ENCODE measurements at regions of chr9 and their contacts with region 1.

Region 1: GRCh38 chr9:111597817-111598729 is 1.4 kb downstream of the PTGR1 start:
- DNase-seq: peak; percentile 27
- ATAC-seq: peak; percentile 61
- H3K4me3 Mint-ChIP-seq: peak overlapping the region; percentile 83
- H3K27ac Mint-ChIP-seq: no peak overlapping the region
- H3K4me1 Mint-ChIP-seq: peaks cover 22% of the 10 kb centered on the region
- H3K27me3 Mint-ChIP-seq: peaks cover 29% of the 10 kb centered on the region
- CTCF ChIP-seq: no peak

Region 2: DNA sequence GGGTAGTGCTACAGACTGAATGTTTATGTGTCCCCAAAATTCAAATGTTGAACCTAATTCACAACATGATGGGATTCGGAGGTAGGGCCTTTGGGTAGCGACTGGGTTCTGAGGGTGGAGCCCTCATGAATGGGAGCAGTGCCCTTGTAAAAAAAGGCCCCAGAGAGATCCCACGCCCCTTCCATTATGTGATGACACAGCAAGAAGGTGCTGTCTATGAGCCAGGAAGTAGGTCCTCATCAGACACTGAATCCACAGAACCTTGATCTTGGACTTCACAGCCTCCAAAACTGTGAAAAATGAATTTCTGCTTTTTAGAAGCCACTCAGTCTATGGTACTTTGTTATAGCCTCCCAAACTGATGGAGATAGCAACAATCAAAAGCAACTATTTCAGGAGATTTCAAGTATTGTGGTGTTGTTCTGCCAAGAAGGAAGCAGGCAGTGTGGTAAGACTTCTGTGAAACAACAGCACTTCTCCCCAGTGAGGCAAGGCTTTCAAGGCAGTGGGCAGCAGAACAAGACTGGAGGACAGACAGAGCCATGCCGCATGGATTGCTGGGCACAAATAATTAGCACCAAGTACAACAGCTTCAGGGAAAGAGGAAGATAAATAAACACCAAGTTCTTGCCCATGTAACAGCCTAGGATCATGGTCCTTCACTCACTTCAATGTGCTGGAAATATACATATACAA is 344.2 kb before region 1 on chr9:
- CTCF ChIA-PET with region 1: no interaction called
- POLR2A ChIA-PET with region 1: no interaction called
- intact Hi-C with region 1: no loop called
- DNase-seq: no peak
- ATAC-seq: no peak
- H3K4me3 Mint-ChIP-seq: no peak overlapping the region
- H3K27ac Mint-ChIP-seq: no peak overlapping the region
- H3K4me1 Mint-ChIP-seq: no peaks in the 10 kb centered on the region
- H3K27me3 Mint-ChIP-seq: no peaks in the 10 kb centered on the region
- CTCF ChIP-seq: no peak

Region 3: GRCh38 chr9:111613441-111614039 is 15.5 kb after region 1 on chr9:
- CTCF ChIA-PET with region 1: no interaction called
- POLR2A ChIA-PET with region 1: interaction called, 11 read pairs
- intact Hi-C with region 1: no loop called
- DNase-seq: no peak
- ATAC-seq: no peak
- H3K4me3 Mint-ChIP-seq: no peak overlapping the region
- H3K27ac Mint-ChIP-seq: no peak overlapping the region
- H3K4me1 Mint-ChIP-seq: no peaks in the 10 kb centered on the region
- H3K27me3 Mint-ChIP-seq: peaks cover 40% of the 10 kb centered on the region
- CTCF ChIP-seq: no peak

Region 4: DNA sequence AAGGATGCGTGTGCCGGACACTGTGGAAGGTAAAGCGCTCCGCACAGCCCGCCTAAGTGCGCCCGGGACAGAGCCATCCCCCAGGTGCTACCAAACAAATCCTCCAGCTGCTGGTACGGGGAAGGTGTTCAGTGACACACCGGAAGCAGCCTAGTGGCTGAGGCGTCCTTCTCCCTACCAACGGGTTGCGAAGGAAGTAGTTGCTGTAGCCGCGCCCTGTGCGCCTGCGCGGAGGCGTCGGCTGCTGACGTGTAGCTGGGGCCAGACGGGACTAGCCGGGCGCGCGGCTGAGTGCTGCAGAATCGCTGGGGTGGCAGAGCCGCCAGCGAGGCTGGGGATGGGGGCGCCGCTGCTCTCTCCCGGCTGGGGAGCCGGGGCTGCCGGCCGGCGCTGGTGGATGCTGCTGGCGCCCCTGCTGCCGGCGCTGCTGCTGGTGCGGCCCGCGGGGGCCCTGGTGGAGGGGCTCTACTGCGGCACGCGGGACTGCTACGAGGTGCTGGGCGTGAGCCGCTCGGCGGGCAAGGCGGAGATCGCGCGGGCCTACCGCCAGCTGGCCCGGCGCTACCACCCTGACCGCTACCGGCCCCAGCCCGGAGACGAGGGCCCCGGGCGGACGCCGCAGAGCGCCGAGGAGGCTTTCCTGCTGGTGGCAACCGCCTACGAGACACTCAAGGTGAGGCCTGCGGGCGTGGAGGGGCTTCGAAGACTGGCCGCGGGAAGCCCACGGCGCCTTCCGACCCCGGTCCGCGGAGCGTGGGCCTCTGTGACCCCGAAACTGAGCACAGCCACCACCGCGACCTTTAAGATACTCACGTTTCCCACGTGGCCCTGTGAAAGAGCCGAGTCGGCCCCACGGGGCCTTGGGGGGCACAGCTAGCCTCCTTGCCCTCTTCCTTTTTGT is 33.2 kb after region 1 on chr9 and contains the start of gene DNAJC25:
- CTCF ChIA-PET with region 1: no interaction called
- POLR2A ChIA-PET with region 1: interaction called, 3 read pairs
- intact Hi-C with region 1: loop called (anchors 2 kb)
- DNase-seq: peak; percentile 91
- ATAC-seq: peak; percentile 94
- H3K4me3 Mint-ChIP-seq: peak within 1 kb of the TSS; percentile 95
- H3K27ac Mint-ChIP-seq: peak within 1 kb of the TSS; percentile 89
- H3K4me1 Mint-ChIP-seq: peaks cover 29% of the 10 kb centered on the region
- H3K27me3 Mint-ChIP-seq: no peaks in the 10 kb centered on the region
- CTCF ChIP-seq: no peak
- total RNA-seq, gene DNAJC25: 3.5 and 4.3 TPM in 2 replicates

Region 5: GRCh38 chr9:111691672-111692329 is 93.7 kb after region 1 on chr9:
- CTCF ChIA-PET with region 1: interaction called, 4 read pairs
- POLR2A ChIA-PET with region 1: no interaction called
- intact Hi-C with region 1: loop called (anchors 1 kb)
- DNase-seq: no peak
- ATAC-seq: no peak
- H3K4me3 Mint-ChIP-seq: no peak overlapping the region
- H3K27ac Mint-ChIP-seq: no peak overlapping the region
- H3K4me1 Mint-ChIP-seq: no peaks in the 10 kb centered on the region
- H3K27me3 Mint-ChIP-seq: no peaks in the 10 kb centered on the region
- CTCF ChIP-seq: no peak

Region 6: DNA sequence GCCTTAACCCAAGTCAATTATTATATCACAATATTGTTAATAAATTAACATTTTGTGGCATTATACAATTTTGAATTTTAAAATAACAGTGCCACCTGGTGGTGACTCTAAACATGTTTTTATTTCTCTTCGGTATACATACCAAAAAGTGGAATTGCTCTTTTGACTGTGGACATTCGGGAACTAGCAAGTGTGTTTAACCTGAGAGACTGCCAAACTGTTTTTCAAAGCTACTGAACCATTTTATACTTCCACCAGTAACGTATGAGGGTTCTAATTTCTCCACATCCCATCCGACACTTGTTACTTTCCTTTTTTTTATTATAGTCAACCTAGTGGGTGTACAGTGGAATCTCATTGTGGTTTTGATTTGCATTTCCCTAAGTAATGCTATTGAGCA is 763.5 kb after region 1 on chr9:
- CTCF ChIA-PET with region 1: interaction called, 6 read pairs
- POLR2A ChIA-PET with region 1: no interaction called
- intact Hi-C with region 1: loop called (anchors 2 kb)
- DNase-seq: no peak
- ATAC-seq: peak; percentile 40
- H3K4me3 Mint-ChIP-seq: peak overlapping the region; percentile 41
- H3K27ac Mint-ChIP-seq: no peak overlapping the region
- H3K4me1 Mint-ChIP-seq: peaks cover 2% of the 10 kb centered on the region
- H3K27me3 Mint-ChIP-seq: no peaks in the 10 kb centered on the region
- CTCF ChIP-seq: peak; percentile 59